ENCODE measurements at regions of chr3 and their contacts with region 1.

Region 1: DNA sequence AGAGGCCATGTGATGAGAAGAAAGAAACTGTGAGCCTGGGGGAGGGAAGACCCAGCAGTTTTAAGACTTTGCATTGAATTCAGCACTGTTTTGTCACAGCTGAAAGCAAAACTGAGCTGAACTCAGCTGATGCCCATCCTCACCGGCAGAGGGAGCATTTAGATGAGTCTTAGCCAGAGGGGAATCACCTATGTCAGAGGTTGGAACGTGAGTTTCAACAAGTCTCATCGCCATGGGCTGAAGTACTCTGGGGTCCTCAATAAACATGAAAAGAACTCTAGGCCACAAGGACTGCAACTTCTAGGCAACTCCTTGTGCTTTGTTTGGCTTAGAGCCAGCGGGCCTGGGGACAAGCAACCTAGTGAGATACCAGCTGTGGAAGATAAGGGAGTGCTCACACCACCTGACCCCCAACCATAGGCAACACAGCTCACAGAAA is 324.5 kb downstream of the TBL1XR1 start:
- DNase-seq: peak; percentile 43 to 69 (median 65)
- H3K4me3 ChIP-seq: no peak overlapping the region
- H3K27ac ChIP-seq: no peak overlapping the region
- H3K4me1 ChIP-seq: no peaks in the 10 kb centered on the region
- H3K27me3 ChIP-seq: no peaks in the 10 kb centered on the region

Region 2: GRCh38 chr3:176850503-176850902 is 22.3 kb before region 1 on chr3:
- CTCF ChIA-PET with region 1: no interaction called
- POLR2A ChIA-PET with region 1: no interaction called
- DNase-seq: no peak
- H3K4me3 ChIP-seq: no peak overlapping the region
- H3K27ac ChIP-seq: no peak overlapping the region
- H3K4me1 ChIP-seq: no peaks in the 10 kb centered on the region
- H3K27me3 ChIP-seq: no peaks in the 10 kb centered on the region

Region 3: DNA sequence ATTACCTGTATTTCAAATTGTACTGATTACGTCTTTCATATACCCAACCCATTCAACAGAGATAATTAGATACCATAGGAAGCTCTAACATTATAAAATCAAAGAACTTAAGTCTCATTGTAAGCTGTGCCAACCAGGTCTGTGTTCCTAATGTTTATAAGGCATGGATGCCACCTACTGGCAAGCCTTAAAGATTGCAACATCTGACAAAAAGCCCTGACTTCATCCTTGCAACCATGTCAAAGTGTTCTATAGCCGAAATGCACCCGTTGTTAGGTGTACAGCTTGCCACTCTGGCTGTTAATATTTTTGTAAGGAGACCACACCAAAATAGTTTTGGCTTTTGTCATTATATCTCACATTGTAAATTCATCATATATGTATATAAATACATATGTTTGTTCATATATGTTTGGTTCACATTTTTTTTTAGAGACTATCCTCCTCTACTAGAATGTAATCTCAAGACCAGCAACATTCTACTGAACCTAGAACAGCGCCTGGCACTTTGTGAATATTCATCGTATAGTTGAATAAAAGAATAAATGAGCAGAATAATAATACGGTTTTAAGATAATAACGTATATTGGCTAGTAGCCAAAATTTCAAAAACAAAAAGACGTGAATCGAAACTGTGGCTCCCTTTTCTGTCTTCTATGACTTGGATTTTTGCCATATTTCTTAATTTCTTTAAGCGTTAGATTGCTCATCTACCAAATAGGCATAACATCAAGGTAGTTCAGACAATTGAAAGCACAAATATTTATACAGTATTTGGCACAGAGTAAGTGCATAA is 66.4 kb after region 1 on chr3:
- CTCF ChIA-PET with region 1: interaction called, 13 read pairs
- POLR2A ChIA-PET with region 1: no interaction called
- DNase-seq: peak; percentile 67 to 85 (median 84)
- H3K4me3 ChIP-seq: no peak overlapping the region
- H3K27ac ChIP-seq: no peak overlapping the region
- H3K4me1 ChIP-seq: no peaks in the 10 kb centered on the region
- H3K27me3 ChIP-seq: no peaks in the 10 kb centered on the region